Endothelial cell of umbilical vein (primary cell): ENCODE measurements at regions of chr6 and their contacts with region 1.

Region 1: DNA sequence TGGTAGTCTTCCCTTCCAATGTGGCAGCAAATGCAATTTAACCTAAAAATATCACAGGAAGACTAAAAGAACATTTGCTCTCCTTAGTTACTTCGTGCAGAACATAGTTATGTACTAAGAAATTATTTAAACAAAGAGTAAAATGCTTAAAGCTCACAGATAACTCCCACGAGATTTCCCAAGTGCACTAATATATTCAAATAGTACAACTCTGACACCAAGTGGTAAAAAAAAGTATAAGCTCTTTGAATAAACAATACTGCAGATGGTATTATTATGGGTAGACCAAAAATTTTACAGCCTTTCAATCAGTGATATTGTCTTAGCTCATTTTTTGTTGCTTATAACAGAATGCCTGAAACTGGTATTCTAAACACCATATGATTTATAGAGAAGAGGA is 52.8 kb upstream of the FILIP1 start:
- DNase-seq: peak; percentile 38
- H3K4me3 ChIP-seq: no peak overlapping the region
- H3K27ac ChIP-seq: no peak overlapping the region
- H3K4me1 ChIP-seq: no peaks in the 10 kb centered on the region
- H3K27me3 ChIP-seq: no peaks in the 10 kb centered on the region
- CTCF ChIP-seq: no peak
- POLR2A ChIP-seq: no peak

Region 2: DNA sequence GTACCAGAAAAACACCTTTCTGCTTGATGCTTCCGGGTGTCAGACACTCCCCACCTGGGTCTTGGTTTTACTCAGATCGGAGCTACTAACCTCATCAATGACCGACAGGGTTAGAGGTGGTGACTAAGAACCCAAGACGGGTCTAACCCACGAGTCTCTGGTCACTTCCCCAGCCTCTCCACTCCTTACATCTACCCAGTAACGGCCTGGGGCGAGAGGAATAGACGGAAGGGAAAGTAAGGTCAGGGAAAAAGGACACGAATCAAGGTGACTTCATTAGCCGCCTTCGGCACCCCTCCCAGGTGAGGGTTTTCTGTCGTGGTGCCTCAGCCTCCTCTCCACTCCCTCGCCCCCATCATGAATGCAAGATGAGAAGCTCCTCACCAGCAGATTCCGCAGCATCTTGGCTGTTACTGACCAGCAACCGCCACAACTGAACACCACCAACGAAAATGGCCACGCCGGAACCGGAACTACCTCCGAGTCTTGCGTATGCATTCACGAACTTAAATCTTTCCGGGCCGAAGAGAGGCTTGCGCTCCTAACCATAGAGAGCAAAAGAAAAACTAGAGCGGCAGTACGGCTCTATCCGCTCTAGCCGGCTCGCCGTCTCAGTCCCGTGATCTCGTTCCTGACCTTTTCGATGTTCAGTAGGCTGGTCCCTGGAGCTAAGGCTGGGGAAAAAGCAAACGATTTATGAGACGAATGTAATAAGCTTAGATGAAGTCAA is 302.9 kb before region 1 on chr6 and contains the start of gene COX7A2:
- CTCF ChIA-PET with region 1: interaction called, 3 read pairs
- POLR2A ChIA-PET with region 1: no interaction called
- dilution Hi-C with region 1: no loop called
- intact Hi-C with region 1: loop called (anchors 5 kb)
- DNase-seq: peak; percentile 98
- H3K4me3 ChIP-seq: peak within 1 kb of the TSS; percentile 75 to 98 (median 90)
- H3K27ac ChIP-seq: peak within 1 kb of the TSS; percentile 90
- H3K4me1 ChIP-seq: peaks cover 4% of the 10 kb centered on the region
- H3K27me3 ChIP-seq: no peaks in the 10 kb centered on the region
- CTCF ChIP-seq: no peak
- POLR2A ChIP-seq: peak; percentile 89
- total RNA-seq, gene COX7A2: 426 and 455 TPM in 2 replicates

Region 3: DNA sequence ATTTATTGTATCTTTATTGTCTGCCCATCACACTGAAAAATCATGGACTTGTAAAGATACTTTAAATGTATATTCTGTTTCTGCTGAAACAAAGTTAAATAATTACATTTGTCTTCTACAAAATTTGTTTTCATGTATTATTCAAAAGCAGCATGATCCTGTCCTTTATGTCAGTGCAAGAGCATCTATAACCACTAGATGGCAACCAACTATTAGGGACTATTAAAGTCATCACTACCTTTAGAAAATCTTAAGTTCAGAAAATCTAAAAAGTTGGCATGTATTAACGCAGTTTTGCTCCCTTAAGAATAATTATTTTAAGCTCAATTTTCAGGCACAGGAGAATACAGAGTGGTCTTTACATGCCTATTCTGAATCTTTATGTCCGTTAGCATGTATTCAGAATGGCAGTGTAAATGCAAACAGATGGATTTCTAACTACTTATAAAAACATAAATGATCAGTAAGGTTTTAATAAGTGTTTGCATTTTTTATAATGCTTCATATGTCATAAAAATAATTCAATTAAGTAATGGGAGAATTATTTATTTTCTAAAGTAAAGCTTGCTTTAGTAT is 279.6 kb before region 1 on chr6:
- CTCF ChIA-PET with region 1: interaction called, 20 read pairs
- POLR2A ChIA-PET with region 1: no interaction called
- dilution Hi-C with region 1: no loop called
- intact Hi-C with region 1: no loop called
- DNase-seq: peak; percentile 75
- H3K4me3 ChIP-seq: no peak overlapping the region
- H3K27ac ChIP-seq: no peak overlapping the region
- H3K4me1 ChIP-seq: peaks cover 19% of the 10 kb centered on the region
- H3K27me3 ChIP-seq: no peaks in the 10 kb centered on the region
- CTCF ChIP-seq: peak; percentile 58 to 59
- POLR2A ChIP-seq: no peak

Region 4: GRCh38 chr6:75563032-75563431 is 16.7 kb after region 1 on chr6:
- CTCF ChIA-PET with region 1: interaction called, 15 read pairs
- POLR2A ChIA-PET with region 1: no interaction called
- dilution Hi-C with region 1: no loop called
- intact Hi-C with region 1: no loop called
- DNase-seq: peak; percentile 35
- H3K4me3 ChIP-seq: no peak overlapping the region
- H3K27ac ChIP-seq: no peak overlapping the region
- H3K4me1 ChIP-seq: no peaks in the 10 kb centered on the region
- H3K27me3 ChIP-seq: peaks cover 17% of the 10 kb centered on the region in 2 experiments
- CTCF ChIP-seq: peak; percentile 44 to 59
- POLR2A ChIP-seq: no peak